Activated CD4-positive, alpha-beta memory T cell treated with anti-CD3 and anti-CD28 coated beads for 36 hours (primary cell): ENCODE measurements at regions of chr4 and their contacts with region 1.

Region 1: GRCh38 chr4:112284662-112285411 is 867 bp downstream of the TIFA start:
- DNase-seq: peak; percentile 39
- H3K4me3 Mint-ChIP-seq: peak overlapping the region; percentile 94
- H3K27ac Mint-ChIP-seq: peak overlapping the region; percentile 97
- H3K4me1 Mint-ChIP-seq: peaks cover 69% of the 10 kb centered on the region
- H3K27me3 Mint-ChIP-seq: no peaks in the 10 kb centered on the region

Region 2: GRCh38 chr4:112119353-112119783 is 165.5 kb before region 1 on chr4:
- CTCF ChIA-PET with region 1: no interaction called
- POLR2A ChIA-PET with region 1: no interaction called
- intact Hi-C with region 1: loop called (anchors 2 kb)
- DNase-seq: peak; percentile 35
- H3K4me3 Mint-ChIP-seq: no peak overlapping the region
- H3K27ac Mint-ChIP-seq: peak overlapping the region; percentile 81
- H3K4me1 Mint-ChIP-seq: peaks cover 12% of the 10 kb centered on the region
- H3K27me3 Mint-ChIP-seq: peaks cover 2% of the 10 kb centered on the region

Region 3: GRCh38 chr4:112231779-112232713 is 52.8 kb before region 1 on chr4 and contains the start of gene AP1AR:
- CTCF ChIA-PET with region 1: interaction called, 7 read pairs
- POLR2A ChIA-PET with region 1: interaction called, 10 read pairs
- intact Hi-C with region 1: loop called (anchors 1 kb)
- DNase-seq: peak; percentile 87
- H3K4me3 Mint-ChIP-seq: peak within 1 kb of the TSS; percentile 87
- H3K27ac Mint-ChIP-seq: peak within 1 kb of the TSS; percentile 98
- H3K4me1 Mint-ChIP-seq: peaks cover 34% of the 10 kb centered on the region
- H3K27me3 Mint-ChIP-seq: no peaks in the 10 kb centered on the region
- total RNA-seq, gene AP1AR: 15.4 to 19.1 TPM

Region 4: DNA sequence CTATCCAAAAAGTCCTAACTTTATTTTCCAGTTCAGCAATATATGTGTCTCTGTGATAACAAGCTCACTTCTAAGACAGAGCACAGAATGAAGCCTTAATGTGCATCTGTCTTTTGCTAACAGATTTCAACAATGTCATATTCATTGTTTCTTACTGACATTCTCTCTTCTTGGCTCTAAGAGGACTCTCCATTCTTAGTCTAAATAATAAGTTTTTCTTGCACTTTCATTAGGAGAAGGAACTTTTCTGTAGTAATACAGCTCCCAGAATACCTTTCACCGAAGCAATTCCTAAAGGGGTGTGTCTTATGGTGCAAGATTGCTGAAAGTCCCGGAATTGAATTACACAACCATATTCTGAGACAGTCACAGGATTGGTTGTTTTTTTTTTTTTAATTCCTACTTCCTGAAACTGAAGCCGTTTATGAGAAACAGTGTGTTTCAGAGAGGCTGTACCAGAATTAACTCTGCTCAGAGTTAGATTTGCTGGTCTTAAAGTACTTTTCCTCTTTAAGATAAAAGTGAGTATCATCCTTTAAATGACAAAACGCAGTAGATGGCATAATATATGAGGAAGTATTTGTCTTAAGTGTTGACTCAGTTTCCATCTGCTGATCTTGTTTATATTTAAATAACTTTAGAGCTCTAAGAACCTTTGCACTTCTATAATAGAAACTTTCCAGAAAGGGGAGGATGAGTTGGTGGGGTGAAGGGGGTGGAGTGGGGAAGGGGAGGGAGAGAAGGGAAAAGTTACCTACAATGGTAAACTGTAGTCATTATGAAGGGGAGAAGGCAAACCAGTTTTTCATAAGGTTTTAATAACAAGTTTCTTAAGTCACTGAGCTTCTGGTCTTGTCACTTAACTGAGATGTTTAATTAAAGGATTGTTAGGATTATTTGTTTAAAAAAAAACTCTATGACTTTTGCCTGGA is 12.4 kb after region 1 on chr4 and contains the start of gene ALPK1:
- CTCF ChIA-PET with region 1: interaction called, 4 read pairs
- POLR2A ChIA-PET with region 1: interaction called, 6 read pairs
- intact Hi-C with region 1: loop called (anchors 1 kb)
- DNase-seq: no peak
- H3K4me3 Mint-ChIP-seq: peak within 1 kb of the TSS; percentile 76
- H3K27ac Mint-ChIP-seq: peak within 1 kb of the TSS; percentile 84
- H3K4me1 Mint-ChIP-seq: peaks cover 23% of the 10 kb centered on the region
- H3K27me3 Mint-ChIP-seq: no peaks in the 10 kb centered on the region
- total RNA-seq, gene ALPK1: 21.5 to 22.9 TPM

Region 5: GRCh38 chr4:112515304-112516067 is 230.6 kb after region 1 on chr4:
- CTCF ChIA-PET with region 1: no interaction called
- POLR2A ChIA-PET with region 1: interaction called, 4 read pairs
- intact Hi-C with region 1: loop called (anchors 2 kb)
- DNase-seq: peak; percentile 67
- H3K4me3 Mint-ChIP-seq: peak overlapping the region; percentile 94
- H3K27ac Mint-ChIP-seq: no peak overlapping the region
- H3K4me1 Mint-ChIP-seq: peaks cover 42% of the 10 kb centered on the region
- H3K27me3 Mint-ChIP-seq: peaks cover 85% of the 10 kb centered on the region